Endothelial cell of umbilical vein (primary cell): ENCODE measurements at regions of chr12 and their contacts with region 1.

Region 1: GRCh38 chr12:10331642-10332239 is 24.1 kb downstream of the KLRD1 start:
- DNase-seq: peak; percentile 62
- H3K4me3 ChIP-seq: no peak overlapping the region
- H3K27ac ChIP-seq: no peak overlapping the region
- H3K4me1 ChIP-seq: no peaks in the 10 kb centered on the region
- H3K27me3 ChIP-seq: no peaks in the 10 kb centered on the region
- CTCF ChIP-seq: peak; percentile 59 to 65
- POLR2A ChIP-seq: no peak

Region 2: GRCh38 chr12:10153271-10154144 is 178.2 kb before region 1 on chr12:
- CTCF ChIA-PET with region 1: interaction called, 12 read pairs
- POLR2A ChIA-PET with region 1: no interaction called
- dilution Hi-C with region 1: no loop called
- intact Hi-C with region 1: loop called (anchors 10 kb)
- DNase-seq: peak; percentile 81
- H3K4me3 ChIP-seq: peak overlapping the region; percentile 44 to 67 (median 48)
- H3K27ac ChIP-seq: peak overlapping the region; percentile 58
- H3K4me1 ChIP-seq: peaks cover 5% of the 10 kb centered on the region
- H3K27me3 ChIP-seq: peaks cover 0 to 2% of the 10 kb centered on the region in 2 experiments
- CTCF ChIP-seq: peak; percentile 70 to 72
- POLR2A ChIP-seq: no peak

Region 3: DNA sequence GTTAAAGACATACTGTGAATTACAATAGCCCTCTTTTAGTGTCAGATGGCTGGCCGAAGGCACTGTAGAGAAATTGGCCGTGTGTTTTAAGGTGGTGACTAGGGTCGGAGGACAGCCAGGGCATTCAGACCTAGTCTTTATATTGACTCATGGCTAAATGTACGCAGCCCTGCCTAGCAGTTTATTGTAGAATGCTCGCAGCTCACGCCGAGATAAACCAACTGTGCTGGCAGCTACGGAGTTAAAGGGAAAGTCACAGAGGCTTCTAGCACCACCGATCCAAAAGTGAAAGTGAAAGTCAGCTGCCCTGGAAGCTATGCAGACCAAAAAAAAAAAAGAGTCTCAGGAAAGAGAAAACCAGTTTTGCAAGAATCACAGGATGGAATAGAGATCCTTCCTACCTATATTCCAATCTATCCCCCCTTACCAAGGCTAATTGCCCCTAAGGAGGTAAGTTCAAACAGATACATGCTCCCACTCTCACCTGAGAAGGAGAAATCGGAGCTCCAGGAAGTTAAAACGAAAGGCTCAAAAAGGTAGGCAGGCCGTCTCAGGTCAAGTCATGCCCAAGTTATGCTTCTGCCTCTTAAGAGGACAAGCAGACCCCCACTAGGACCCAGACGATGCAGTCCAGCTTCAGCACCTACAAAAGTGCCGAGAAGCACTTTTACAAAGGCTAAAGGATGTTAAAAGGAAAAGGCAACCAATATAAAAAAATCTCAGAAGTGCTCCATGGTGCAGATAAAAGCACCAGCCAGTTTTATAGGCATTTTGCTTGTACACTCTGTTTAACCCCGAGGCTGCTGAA is 33.3 kb after region 1 on chr12:
- CTCF ChIA-PET with region 1: interaction called, 18 read pairs
- POLR2A ChIA-PET with region 1: no interaction called
- dilution Hi-C with region 1: no loop called
- intact Hi-C with region 1: no loop called
- DNase-seq: peak; percentile 82
- H3K4me3 ChIP-seq: peak overlapping the region; percentile 62 to 93 (median 78)
- H3K27ac ChIP-seq: peak overlapping the region; percentile 77
- H3K4me1 ChIP-seq: peaks cover 26% of the 10 kb centered on the region
- H3K27me3 ChIP-seq: no peaks in the 10 kb centered on the region
- CTCF ChIP-seq: no peak
- POLR2A ChIP-seq: no peak

Region 4: DNA sequence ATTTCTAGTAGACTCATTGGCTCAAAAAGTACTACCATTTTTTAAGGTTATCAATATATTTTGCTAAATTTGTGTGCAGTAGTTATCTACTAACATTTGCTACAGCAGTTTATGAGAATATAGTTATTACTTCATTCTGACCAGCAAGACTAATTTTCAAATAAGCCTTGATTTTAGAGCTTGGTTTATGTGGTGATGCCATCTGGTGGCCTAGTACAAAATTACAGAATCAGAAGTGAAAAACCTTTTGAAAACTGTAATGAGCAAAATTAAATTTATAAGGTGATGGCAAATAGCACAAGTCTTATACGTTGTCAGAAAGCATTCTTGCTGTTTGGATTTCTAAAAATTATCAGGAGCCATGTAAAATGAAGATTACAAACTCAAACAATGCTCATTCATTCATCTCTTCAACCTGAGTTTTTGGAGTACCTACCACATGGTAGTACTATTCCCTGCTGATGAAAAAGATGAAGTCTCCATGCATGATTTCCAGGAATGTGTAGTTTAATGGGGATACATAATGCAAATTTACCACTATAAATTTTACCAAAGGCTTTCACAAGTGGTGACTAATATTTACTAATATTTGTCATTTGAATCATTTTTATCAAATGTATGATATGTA is 230.7 kb after region 1 on chr12:
- CTCF ChIA-PET with region 1: interaction called, 54 read pairs
- POLR2A ChIA-PET with region 1: no interaction called
- dilution Hi-C with region 1: no loop called
- intact Hi-C with region 1: loop called (anchors 1 kb)
- DNase-seq: peak; percentile 72
- H3K4me3 ChIP-seq: no peak overlapping the region
- H3K27ac ChIP-seq: no peak overlapping the region
- H3K4me1 ChIP-seq: no peaks in the 10 kb centered on the region
- H3K27me3 ChIP-seq: no peaks in the 10 kb centered on the region
- CTCF ChIP-seq: peak; percentile 34 to 41
- POLR2A ChIP-seq: no peak

Region 5: DNA sequence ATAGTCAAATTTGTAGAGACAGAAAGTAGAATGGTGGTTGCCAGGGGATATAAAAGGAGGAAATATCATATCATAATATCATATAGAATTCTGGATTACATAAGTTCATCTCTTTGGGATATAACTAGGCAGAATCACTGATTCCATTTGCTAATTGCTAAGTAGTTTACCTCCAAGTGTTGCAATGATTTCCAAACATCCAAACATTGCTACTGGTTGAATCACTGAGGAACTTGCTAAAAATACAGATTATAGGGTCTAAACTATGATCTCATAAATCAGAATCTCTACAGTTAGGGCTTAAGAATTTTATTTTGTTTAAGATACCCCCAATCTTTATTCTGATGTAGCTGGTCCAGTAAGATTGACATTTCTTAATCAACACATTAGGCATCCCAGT is 871.1 kb after region 1 on chr12:
- CTCF ChIA-PET with region 1: no interaction called
- POLR2A ChIA-PET with region 1: no interaction called
- dilution Hi-C with region 1: no loop called
- intact Hi-C with region 1: loop called (anchors 5 kb)
- DNase-seq: no peak
- H3K4me3 ChIP-seq: no peak overlapping the region
- H3K27ac ChIP-seq: no peak overlapping the region
- H3K4me1 ChIP-seq: no peaks in the 10 kb centered on the region
- H3K27me3 ChIP-seq: no peaks in the 10 kb centered on the region
- CTCF ChIP-seq: no peak
- POLR2A ChIP-seq: no peak